Ascending aorta (tissue), 2 donors: ENCODE measurements at regions of chr13 and their contacts with region 1.

Region 1: DNA sequence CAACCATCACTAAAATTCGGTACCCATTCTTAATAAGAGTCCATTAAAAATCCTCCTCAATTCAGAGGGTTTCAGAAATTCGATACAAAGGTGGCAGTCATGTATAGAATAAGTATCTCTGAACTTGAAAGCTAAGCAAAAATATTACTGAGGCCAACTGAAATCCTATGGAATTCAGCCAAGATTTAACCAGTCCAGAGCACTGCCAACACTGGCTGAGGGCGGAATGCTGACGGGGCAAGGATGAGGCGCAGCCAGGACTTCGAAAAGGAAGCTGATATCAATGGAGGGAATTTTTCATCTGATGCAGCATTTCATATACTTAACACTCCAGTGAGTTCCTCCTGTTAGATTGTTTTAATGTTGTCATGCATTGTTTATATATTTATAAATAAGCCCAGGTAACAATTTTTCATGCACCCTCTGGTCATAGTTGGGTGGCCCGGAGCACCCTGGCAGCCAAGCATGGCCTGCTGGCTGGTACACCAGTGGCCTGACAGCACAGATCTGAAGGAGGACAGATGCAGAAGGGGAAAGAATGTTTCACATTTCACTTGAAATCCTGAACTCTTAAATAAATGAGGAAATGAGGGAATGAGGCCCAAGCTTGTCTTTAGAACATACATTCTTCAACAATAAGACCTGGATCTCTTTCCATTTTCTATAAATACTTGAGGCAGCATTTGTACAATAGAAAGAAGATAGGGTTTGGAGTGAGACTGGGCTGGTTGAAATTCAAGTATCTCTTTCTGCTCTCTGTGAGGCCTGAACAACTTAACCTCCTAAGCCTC is 41.5 kb downstream of the WDFY2 start:
- DNase-seq: no peak
- H3K4me3 ChIP-seq: no peak overlapping the region
- H3K27ac ChIP-seq: no peak overlapping the region
- H3K4me1 ChIP-seq: peaks cover 5 to 24% of the 10 kb centered on the region in 2 donors
- H3K27me3 ChIP-seq: no peaks in the 10 kb centered on the region
- CTCF ChIP-seq: no peak

Region 2: DNA sequence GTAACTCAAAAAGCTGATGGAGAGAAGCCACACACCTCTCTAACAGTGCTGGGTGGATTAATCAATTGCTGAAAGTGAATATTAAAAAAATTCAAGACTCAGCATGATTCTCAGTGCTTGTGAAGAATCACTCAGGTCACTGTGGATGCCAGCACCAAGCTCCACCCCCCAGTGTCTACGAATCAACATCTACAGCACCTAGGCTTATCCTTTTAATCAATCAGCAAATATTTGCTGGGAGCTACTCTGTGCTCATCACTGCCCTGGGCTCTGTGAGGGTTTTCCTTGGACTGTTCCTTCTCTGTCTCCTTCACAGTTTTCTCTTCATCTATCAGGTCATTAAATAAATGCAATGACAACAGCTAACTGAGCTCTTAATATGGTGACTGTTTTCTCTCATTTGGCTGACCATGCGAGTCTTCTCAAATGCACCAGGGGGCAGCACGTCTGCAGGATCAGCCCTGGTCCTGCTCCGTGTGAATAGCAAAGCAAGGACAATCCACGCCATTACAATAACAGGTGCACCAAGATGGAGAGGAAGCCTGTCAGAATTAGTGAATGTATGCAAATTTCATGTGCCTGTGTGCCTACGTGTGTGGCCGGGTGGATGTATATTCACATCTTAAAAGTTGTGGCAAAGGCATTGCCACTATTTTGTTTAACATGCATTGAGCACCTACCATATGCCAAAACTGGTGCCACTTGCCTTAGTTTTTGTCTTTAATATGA is 500.1 kb before region 1 on chr13:
- intact Hi-C with region 1: no loop called
- DNase-seq: no peak
- H3K4me3 ChIP-seq: no peak overlapping the region
- H3K27ac ChIP-seq: no peak overlapping the region
- H3K4me1 ChIP-seq: no peaks in the 10 kb centered on the region
- H3K27me3 ChIP-seq: no peaks in the 10 kb centered on the region
- CTCF ChIP-seq: peak; percentile 40 to 65 (median 48)

Region 3: DNA sequence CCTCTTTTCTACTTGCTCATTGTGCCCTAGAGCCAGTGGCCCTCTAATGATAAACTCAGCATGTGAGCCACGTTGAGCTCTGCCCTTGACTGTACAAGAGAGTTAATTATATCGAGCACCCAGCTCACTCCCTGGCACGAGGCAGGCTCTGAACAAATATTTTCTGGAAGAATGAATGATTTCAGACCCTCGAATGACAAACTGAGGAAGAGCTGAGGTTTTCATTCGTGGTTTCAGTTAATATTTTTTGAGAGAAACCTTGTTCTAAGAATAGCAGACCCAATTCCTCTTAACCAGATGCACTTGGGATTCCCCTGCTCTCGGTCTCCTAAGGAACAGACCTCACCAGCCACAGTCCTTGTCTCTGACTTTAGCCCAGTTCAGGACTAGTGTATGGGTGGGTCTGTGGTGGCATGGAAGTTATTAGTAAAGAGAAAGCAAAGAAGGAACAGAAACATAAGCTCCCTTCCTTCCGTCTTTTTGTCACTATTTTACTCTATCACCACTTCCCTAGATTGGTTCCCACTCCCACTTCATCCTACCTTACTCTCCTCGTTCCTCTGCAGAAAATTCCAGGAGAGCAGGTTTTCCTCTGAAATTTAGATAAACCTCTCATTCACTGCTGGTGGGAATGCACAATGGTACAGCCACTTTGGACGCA is 63.6 kb before region 1 on chr13:
- intact Hi-C with region 1: no loop called
- DNase-seq: no peak
- H3K4me3 ChIP-seq: no peak overlapping the region
- H3K27ac ChIP-seq: no peak overlapping the region
- H3K4me1 ChIP-seq: no peaks in the 10 kb centered on the region
- H3K27me3 ChIP-seq: no peaks in the 10 kb centered on the region
- CTCF ChIP-seq: no peak

Region 4: DNA sequence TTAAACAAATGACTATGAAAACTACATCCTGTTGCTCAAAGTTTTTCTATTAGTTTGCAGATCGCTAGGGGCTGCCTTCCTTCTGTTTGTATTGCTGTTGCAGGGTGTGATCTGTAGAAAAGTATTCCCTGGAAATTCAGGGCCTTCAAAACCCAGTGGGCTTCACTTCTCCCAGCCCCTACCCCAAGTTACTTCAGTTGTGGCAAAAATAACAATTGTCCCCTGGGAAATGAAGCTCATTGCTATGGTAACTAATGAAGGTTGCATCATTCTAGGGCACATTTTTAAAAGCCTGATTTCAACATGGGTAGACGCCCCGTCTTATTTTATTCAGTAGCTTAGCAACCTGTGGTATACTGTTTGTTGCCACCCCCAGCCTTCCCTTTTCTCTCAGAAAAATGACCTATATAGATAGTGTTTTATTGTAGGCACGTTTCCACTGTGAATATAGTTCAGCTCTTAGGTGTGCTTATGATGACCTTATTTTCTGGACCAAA is 19.5 kb after region 1 on chr13:
- intact Hi-C with region 1: loop called (anchors 2 kb)
- DNase-seq: peak in 1 of 2 donors; percentile 66
- H3K4me3 ChIP-seq: no peak overlapping the region
- H3K27ac ChIP-seq: no peak overlapping the region
- H3K4me1 ChIP-seq: peaks cover 0 to 27% of the 10 kb centered on the region in 2 donors
- H3K27me3 ChIP-seq: no peaks in the 10 kb centered on the region
- CTCF ChIP-seq: no peak

Region 5: DNA sequence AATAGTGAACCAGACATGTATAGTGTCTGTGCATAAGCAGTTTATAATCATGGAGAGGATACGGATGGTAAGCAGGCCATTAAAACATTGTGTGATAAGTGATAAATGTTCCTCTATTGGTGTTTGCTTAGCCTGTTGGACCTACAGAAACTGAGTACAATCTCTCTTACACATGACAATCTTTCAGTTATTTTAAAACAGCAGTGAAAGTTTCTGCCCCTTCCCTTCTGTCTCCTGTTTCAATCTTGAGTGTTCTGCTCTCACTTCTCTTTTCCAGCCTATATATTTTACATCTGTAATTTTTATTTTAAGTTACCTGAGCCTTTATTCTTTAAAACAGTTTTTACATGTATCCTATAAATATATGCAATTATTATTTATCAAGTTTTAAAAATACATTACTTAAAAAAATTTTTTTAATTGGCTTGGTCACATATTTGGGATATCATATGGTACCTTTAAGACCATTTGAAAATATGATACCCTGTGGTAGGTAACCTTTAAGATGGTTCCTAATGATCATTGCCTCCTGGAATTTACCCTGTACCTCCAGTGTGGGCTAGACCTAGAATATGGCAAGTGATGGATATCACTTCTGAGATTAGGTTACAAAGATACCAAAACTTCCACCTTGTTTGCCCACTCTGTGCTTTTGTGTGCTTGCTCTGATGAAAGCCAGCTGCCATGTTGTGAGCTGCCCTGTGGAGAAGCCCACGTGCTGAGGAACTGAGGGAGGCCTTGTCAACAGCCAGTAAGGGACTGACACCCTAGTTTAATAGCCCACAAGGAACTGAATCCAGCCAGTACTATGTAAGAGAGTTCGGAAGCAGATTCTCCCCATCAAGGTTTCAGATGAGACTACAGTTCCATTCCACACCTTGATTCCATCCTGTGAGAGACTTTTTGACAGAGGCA is 78.9 kb after region 1 on chr13:
- intact Hi-C with region 1: no loop called
- DNase-seq: no peak
- H3K4me3 ChIP-seq: no peak overlapping the region
- H3K27ac ChIP-seq: no peak overlapping the region
- H3K4me1 ChIP-seq: no peaks in the 10 kb centered on the region
- H3K27me3 ChIP-seq: no peaks in the 10 kb centered on the region
- CTCF ChIP-seq: no peak

Region 6: DNA sequence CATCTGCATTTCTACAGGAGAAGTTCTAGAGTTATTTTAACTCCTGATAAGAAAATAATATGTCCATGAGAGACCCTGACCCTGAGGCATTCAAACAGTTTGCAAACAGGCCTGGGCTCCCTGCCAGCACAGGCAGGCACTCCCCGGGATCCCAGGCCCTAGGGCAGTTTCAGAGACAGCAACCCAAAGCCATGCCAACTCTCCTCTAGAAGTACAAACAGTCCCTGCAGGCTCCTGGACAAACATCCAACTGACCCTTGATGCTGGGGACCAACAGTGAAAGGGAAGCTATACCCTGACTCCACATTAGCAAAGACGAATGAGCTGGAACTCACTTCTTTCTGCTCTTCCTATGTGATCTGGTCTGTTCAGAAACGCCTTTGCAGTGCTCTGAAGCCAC is 280.8 kb after region 1 on chr13:
- intact Hi-C with region 1: no loop called
- DNase-seq: no peak
- H3K4me3 ChIP-seq: no peak overlapping the region
- H3K27ac ChIP-seq: no peak overlapping the region
- H3K4me1 ChIP-seq: no peaks in the 10 kb centered on the region
- H3K27me3 ChIP-seq: no peaks in the 10 kb centered on the region
- CTCF ChIP-seq: no peak